Motor neuron (in vitro differentiated cells): ENCODE measurements at regions of chr17 and their contacts with region 1.

Region 1: GRCh38 chr17:59427425-59427921 is 96.0 kb downstream of the YPEL2 start:
- ATAC-seq: peak in 6 of 8 experiments; percentile 4 to 92 (median 47)
- H3K4me3 ChIP-seq: no peak overlapping the region
- H3K27ac ChIP-seq: no peak overlapping the region
- H3K4me1 ChIP-seq: peaks cover 3 to 5% of the 10 kb centered on the region in 2 donors

Region 2: GRCh38 chr17:59361916-59362810 is 65.3 kb before region 1 on chr17:
- in situ Hi-C with region 1: loop called in 1 of 9 experiments (anchors 10 kb)
- ATAC-seq: peak; percentile 43 to 89 (median 67)
- H3K4me3 ChIP-seq: no peak overlapping the region
- H3K27ac ChIP-seq: no peak overlapping the region
- H3K4me1 ChIP-seq: peaks cover 30 to 36% of the 10 kb centered on the region in 2 donors